ENCODE measurements at regions of chr6 and their contacts with region 1.

Region 1: GRCh38 chr6:116298973-116299372 is 19.2 kb upstream of the TSPYL1 start:
- DNase-seq: no peak
- H3K4me3 ChIP-seq: no peak overlapping the region
- H3K27ac ChIP-seq: no peak overlapping the region
- H3K4me1 ChIP-seq: no peaks in the 10 kb centered on the region
- H3K27me3 ChIP-seq: no peaks in the 10 kb centered on the region
- CTCF ChIP-seq: no peak
- POLR2A ChIP-seq: no peak

Region 2: DNA sequence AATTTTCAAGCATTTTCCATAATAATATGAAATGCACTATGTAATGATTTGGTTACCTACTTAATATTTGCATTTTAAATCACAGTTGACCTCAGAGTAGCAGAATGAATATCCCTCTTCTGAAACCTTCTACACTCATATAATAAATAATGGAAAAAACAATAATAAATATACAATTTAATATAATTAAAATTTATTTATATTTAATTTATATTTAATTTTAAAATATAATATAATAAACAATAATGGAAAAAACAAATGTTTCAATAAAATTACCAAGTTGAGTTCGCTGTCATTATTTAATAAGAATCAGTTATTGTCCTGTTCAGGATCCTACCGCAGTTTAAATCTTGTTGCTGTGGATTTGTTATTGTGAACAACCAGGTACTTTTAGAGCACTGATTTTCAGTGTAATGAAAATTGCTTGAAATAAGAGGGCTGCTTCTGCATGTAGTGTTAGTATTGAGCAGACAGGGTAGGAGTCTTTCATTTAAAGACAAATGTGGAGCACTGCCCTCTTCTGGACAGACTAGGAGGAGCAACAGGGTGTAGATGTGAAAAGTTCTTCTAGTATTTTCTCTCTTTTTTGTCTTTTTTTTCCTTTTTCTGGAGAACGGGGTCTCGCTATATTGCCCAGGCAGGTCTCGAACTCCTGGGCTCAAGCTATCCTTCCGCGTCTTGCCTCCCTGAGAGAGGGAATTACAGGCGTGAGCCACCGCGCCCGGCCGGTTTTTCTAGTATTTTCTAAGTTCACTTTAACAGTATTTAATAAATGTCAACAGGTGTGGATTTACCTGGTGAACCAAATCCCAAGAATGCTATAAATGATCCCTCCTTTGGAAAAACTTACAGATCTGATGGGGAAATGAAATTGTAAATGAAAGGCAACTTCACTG is 232.9 kb after region 1 on chr6:
- intact Hi-C with region 1: loop called (anchors 10 kb)
- DNase-seq: peak; percentile 10 to 21
- H3K4me3 ChIP-seq: no peak overlapping the region
- H3K27ac ChIP-seq: no peak overlapping the region
- H3K4me1 ChIP-seq: peaks cover 0 to 8% of the 10 kb centered on the region in 2 donors
- H3K27me3 ChIP-seq: no peaks in the 10 kb centered on the region
- CTCF ChIP-seq: peak in 4 of 6 experiments; percentile 33 to 49 (median 45)
- POLR2A ChIP-seq: no peak

Measured in thyroid gland (tissue), 4 donors.